ENCODE measurements at regions of chrX and their contacts with region 1.

Region 1: GRCh38 chrX:78024349-78025108 is 55.1 kb upstream of the PGAM4 start:
- DNase-seq: peak; percentile 49
- H3K4me3 Mint-ChIP-seq: no peak overlapping the region
- H3K27ac Mint-ChIP-seq: no peak overlapping the region
- H3K4me1 Mint-ChIP-seq: no peaks in the 10 kb centered on the region
- H3K27me3 Mint-ChIP-seq: no peaks in the 10 kb centered on the region
- CTCF ChIP-seq: peak; percentile 71

Region 2: GRCh38 chrX:77749695-77750094 is 274.8 kb before region 1 on chrX:
- CTCF ChIA-PET with region 1: no interaction called
- POLR2A ChIA-PET with region 1: no interaction called
- intact Hi-C with region 1: no loop called
- DNase-seq: peak; percentile 13
- H3K4me3 Mint-ChIP-seq: no peak overlapping the region
- H3K27ac Mint-ChIP-seq: no peak overlapping the region
- H3K4me1 Mint-ChIP-seq: no peaks in the 10 kb centered on the region
- H3K27me3 Mint-ChIP-seq: no peaks in the 10 kb centered on the region
- CTCF ChIP-seq: no peak

Region 3: DNA sequence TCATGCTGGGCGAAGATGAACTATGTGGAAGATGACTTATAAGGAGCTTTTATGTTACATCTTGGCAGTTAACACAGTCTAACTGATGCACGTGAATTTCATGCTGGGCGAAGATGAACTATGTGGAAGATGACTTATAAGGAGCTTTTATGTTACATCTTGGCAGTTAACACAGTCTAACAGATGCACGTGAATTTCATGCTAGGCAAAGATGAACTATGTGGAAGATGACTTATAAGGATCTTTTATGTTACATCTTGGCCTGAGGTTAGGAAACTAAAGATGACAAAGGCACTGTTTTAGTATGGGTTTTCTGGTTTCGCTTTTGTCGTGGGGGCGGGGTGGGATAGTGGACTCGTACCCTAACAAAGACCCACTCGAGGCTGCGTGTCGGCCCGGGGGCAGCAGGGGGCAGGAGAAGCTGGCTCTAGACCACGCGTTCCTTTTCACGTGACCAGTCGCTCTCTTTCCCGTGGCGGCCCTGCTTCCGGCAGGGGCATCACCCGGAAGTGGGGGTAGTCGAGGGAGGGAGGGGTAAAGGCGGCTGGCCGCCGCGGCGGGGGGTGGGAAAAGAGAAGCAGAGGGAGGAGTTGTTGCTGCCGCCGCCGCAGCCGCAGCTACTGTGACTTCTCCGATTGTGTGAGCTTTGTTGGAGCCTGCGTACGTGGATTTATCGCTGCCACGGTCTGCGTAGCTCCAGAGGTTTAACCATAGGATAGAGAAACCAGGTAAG is 114.3 kb before region 1 on chrX and contains the start of gene ATP7A:
- CTCF ChIA-PET with region 1: interaction called, 36 read pairs
- POLR2A ChIA-PET with region 1: interaction called, 7 read pairs
- intact Hi-C with region 1: loop called (anchors 1 kb)
- DNase-seq: peak; percentile 79
- H3K4me3 Mint-ChIP-seq: peak within 1 kb of the TSS; percentile 91
- H3K27ac Mint-ChIP-seq: peak within 1 kb of the TSS; percentile 85
- H3K4me1 Mint-ChIP-seq: no peaks in the 10 kb centered on the region
- H3K27me3 Mint-ChIP-seq: no peaks in the 10 kb centered on the region
- CTCF ChIP-seq: no peak
- total RNA-seq, gene ATP7A: 3.8 and 4.8 TPM in 2 replicates

Region 4: DNA sequence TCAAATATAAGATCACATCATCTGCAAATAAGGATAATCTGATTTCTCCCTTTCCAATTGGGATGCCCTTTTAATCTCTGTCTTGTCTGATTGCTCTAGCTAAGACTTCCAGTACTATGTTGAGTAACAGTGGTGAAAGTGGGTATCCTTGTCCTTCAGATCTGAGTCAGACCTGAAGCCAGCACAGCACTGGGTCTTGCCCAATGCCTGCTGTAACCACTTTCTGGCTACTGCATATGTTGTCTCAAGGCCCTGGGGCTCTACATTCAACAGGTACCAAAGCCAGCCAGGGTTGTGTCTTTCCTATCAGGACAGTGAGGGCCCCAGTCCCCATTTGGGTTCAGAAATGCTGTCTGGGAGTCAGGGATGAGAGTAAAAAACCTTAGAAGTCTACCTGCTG is 212.6 kb after region 1 on chrX:
- CTCF ChIA-PET with region 1: no interaction called
- POLR2A ChIA-PET with region 1: no interaction called
- intact Hi-C with region 1: no loop called
- DNase-seq: peak; percentile 59
- H3K4me3 Mint-ChIP-seq: no peak overlapping the region
- H3K27ac Mint-ChIP-seq: no peak overlapping the region
- H3K4me1 Mint-ChIP-seq: no peaks in the 10 kb centered on the region
- H3K27me3 Mint-ChIP-seq: no peaks in the 10 kb centered on the region
- CTCF ChIP-seq: no peak